ENCODE measurements at regions of chr5 and their contacts with region 1.

Region 1: GRCh38 chr5:119063579-119064379 is 7.1 kb upstream of the DMXL1 start:
- DNase-seq: no peak
- H3K4me3 Mint-ChIP-seq: peak overlapping the region; percentile 7
- H3K27ac Mint-ChIP-seq: peak overlapping the region; percentile 52
- H3K4me1 Mint-ChIP-seq: peaks cover 14% of the 10 kb centered on the region
- H3K27me3 Mint-ChIP-seq: peaks cover 1% of the 10 kb centered on the region

Region 2: GRCh38 chr5:118762291-118762690 is 301.5 kb before region 1 on chr5:
- intact Hi-C with region 1: no loop called
- DNase-seq: no peak
- H3K4me3 Mint-ChIP-seq: no peak overlapping the region
- H3K27ac Mint-ChIP-seq: no peak overlapping the region
- H3K4me1 Mint-ChIP-seq: no peaks in the 10 kb centered on the region
- H3K27me3 Mint-ChIP-seq: peaks cover 2% of the 10 kb centered on the region

Region 3: GRCh38 chr5:119031905-119032304 is 31.9 kb before region 1 on chr5:
- intact Hi-C with region 1: loop called (anchors 1 kb)
- DNase-seq: no peak
- H3K4me3 Mint-ChIP-seq: peak overlapping the region; percentile 45
- H3K27ac Mint-ChIP-seq: peak overlapping the region; percentile 21
- H3K4me1 Mint-ChIP-seq: peaks cover 35% of the 10 kb centered on the region
- H3K27me3 Mint-ChIP-seq: peaks cover 2% of the 10 kb centered on the region